Activated CD8-positive, alpha-beta memory T cell treated with anti-CD3 and anti-CD28 coated beads, Interleukin-2, amount 10 ng/mL, durations not matched to agents 7 days and 5 days (primary cell): ENCODE measurements at regions of chr19 and their contacts with region 1.

Region 1: GRCh38 chr19:4139614-4140236 is 13.7 kb upstream of the CREB3L3 start:
- DNase-seq: peak; percentile 92
- ATAC-seq: peak; percentile 97
- H3K4me3 Mint-ChIP-seq: peak overlapping the region; percentile 33
- H3K27ac Mint-ChIP-seq: peak overlapping the region; percentile 45
- H3K4me1 Mint-ChIP-seq: peaks cover 10% of the 10 kb centered on the region
- H3K27me3 Mint-ChIP-seq: peaks cover 10% of the 10 kb centered on the region

Region 2: DNA sequence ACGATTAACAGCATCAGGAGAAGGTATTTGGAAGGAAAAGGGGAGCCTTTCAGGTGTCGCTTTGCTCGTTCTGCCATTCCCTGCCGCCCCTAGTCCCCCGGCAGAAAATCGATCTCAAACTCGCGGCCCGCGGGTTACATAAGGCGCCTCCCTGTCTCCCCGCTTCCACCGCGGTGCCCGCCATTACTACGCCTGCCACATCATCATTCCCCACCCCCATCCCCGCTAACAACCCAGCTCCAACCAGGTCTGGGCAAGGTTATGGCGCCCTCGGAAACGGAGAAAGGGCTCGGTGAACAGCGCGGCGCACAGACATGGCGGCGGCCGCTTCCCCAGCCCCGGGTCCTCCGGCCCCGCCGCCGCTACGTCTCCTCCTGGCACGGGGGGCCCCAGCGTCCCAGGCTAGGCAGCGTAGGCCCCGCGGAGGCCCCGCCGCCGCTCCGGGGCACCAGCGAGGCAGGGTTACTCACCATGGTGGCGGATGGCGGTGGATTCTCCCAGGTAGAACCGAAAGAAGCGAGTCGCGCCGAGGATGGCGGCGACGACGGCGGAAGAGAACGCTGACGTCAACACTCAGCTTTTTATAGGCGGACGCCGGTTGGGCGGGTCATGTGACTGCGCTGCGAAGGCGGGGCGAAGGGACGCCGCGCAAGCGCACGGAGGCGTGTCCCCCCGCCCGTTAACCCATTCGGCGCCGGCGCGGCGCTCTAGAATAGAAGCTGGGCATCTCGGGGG is 154.7 kb before region 1 on chr19 and contains the start of gene EEF2:
- CTCF ChIA-PET with region 1: interaction called, 31 read pairs
- DNase-seq: peak; percentile 92
- ATAC-seq: peak; percentile 49
- H3K4me3 Mint-ChIP-seq: peak within 1 kb of the TSS; percentile 98
- H3K27ac Mint-ChIP-seq: peak within 1 kb of the TSS; percentile 97
- H3K4me1 Mint-ChIP-seq: peaks cover 52% of the 10 kb centered on the region
- H3K27me3 Mint-ChIP-seq: no peaks in the 10 kb centered on the region
- total RNA-seq, gene EEF2: 1,382 to 1,952 TPM

Region 3: GRCh38 chr19:4065430-4066175 is 74.1 kb before region 1 on chr19:
- CTCF ChIA-PET with region 1: interaction called, 14 read pairs
- DNase-seq: peak; percentile 98
- ATAC-seq: peak; percentile 68
- H3K4me3 Mint-ChIP-seq: peak overlapping the region; percentile 40
- H3K27ac Mint-ChIP-seq: peak overlapping the region; percentile 46
- H3K4me1 Mint-ChIP-seq: peaks cover 48% of the 10 kb centered on the region
- H3K27me3 Mint-ChIP-seq: no peaks in the 10 kb centered on the region

Region 4: GRCh38 chr19:4103073-4103418 is 36.7 kb before region 1 on chr19:
- CTCF ChIA-PET with region 1: interaction called, 26 read pairs
- DNase-seq: no peak
- ATAC-seq: no peak
- H3K4me3 Mint-ChIP-seq: no peak overlapping the region
- H3K27ac Mint-ChIP-seq: peak overlapping the region; percentile 98
- H3K4me1 Mint-ChIP-seq: peaks cover 44% of the 10 kb centered on the region
- H3K27me3 Mint-ChIP-seq: no peaks in the 10 kb centered on the region

Region 5: DNA sequence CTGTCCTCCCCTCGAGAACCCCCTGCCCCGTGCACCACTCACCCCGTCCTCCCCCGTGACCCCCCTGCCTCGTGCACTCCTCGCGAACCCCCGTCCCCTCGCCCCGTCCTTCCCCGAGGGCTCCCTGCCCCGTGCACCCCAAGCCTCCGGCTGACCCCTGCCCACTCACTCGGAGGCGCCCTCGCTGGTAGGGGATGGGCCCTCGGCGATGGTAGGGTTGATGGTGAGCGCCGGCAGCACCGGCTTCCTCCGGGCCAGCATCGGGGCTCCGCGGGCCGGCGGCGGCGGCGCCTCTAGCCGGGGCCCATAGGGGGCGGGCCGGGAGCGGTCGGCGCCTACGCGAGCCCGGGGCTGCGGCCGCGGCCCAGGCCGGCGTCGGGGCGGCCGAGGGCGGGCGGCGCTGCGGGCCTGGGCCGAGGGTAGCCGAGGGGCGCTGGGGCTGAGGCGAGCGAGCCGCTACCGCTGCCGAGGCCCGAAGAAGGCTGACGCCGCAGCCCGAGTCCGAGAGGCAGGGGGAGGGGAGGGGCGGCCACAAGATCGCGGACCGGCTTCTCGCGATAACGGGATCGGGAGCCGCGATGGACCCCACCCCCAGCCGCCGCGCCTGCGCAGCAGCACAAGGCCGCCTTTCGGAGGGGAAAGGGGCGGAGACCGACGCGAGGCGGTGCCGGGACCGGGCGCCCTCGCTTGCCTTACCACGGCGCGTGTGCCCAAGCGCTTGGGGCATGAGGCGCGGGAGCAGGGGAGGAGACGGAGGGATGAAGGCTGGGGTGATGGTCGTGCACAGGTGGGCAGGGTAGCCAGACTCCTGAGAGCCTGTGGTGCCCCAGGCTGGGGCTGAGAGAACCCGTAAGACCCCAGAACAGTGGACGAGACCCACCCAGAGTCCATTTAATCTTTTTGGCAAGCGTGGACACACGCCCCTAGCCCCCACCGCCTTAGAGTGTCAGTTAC is 15.8 kb before region 1 on chr19 and contains the start of gene MAP2K2:
- CTCF ChIA-PET with region 1: interaction called, 33 read pairs
- DNase-seq: peak; percentile 96
- ATAC-seq: peak; percentile 97
- H3K4me3 Mint-ChIP-seq: peak within 1 kb of the TSS; percentile 87
- H3K27ac Mint-ChIP-seq: peak within 1 kb of the TSS; percentile 87
- H3K4me1 Mint-ChIP-seq: peaks cover 26% of the 10 kb centered on the region
- H3K27me3 Mint-ChIP-seq: no peaks in the 10 kb centered on the region
- total RNA-seq, gene MAP2K2: 201 to 238 TPM

Region 6: GRCh38 chr19:4199699-4200293 is 60.1 kb after region 1 on chr19:
- CTCF ChIA-PET with region 1: interaction called, 28 read pairs
- DNase-seq: no peak
- ATAC-seq: no peak
- H3K4me3 Mint-ChIP-seq: no peak overlapping the region
- H3K27ac Mint-ChIP-seq: no peak overlapping the region
- H3K4me1 Mint-ChIP-seq: peaks cover 11% of the 10 kb centered on the region
- H3K27me3 Mint-ChIP-seq: peaks cover 28% of the 10 kb centered on the region

Region 7: GRCh38 chr19:4409123-4409933 is 269.6 kb after region 1 on chr19:
- CTCF ChIA-PET with region 1: no interaction called
- DNase-seq: no peak
- ATAC-seq: no peak
- H3K4me3 Mint-ChIP-seq: no peak overlapping the region
- H3K27ac Mint-ChIP-seq: no peak overlapping the region
- H3K4me1 Mint-ChIP-seq: peaks cover 24% of the 10 kb centered on the region
- H3K27me3 Mint-ChIP-seq: no peaks in the 10 kb centered on the region